ENCODE measurements at regions of chr10 and their contacts with region 1.

Region 1: GRCh38 chr10:17257466-17258321 is 29.7 kb downstream of the VIM start:
- DNase-seq: peak; percentile 68
- H3K4me3 ChIP-seq: no peak overlapping the region
- H3K27ac ChIP-seq: no peak overlapping the region
- H3K4me1 ChIP-seq: no peaks in the 10 kb centered on the region
- CTCF ChIP-seq: peak; percentile 89

Region 2: GRCh38 chr10:16828114-16828568 is 429.6 kb before region 1 on chr10:
- CTCF ChIA-PET with region 1: no interaction called
- POLR2A ChIA-PET with region 1: no interaction called
- intact Hi-C with region 1: loop called (anchors 2 kb)
- DNase-seq: peak; percentile 77
- H3K4me3 ChIP-seq: no peak overlapping the region
- H3K27ac ChIP-seq: no peak overlapping the region
- H3K4me1 ChIP-seq: no peaks in the 10 kb centered on the region
- CTCF ChIP-seq: peak; percentile 76

Region 3: DNA sequence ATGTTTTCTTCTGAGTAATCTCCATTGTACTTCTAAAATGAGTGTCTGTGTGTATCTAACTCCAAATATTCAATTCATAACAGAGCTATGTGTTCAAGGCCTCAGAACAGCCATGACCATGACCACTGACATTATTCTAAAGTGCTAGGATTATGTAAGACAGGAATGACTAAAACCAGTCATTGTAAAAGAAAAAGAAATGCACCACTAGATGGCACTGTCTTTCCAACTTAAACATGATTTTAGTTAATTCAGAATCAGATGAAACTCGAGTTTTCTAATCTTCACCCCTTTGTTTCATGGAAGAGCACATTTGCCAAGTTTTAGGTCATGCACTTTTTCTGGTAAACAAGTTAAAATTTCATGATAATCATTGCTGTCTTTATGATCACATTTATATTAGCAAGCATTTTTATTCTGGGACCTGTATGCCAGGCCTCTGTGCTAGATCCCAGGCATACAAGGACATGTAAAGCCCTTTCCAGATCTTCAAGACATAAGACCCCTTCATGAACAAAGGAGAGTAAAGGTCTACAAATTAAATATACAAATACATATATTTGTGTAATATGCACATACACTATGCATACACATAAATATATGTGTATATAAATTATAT is 414.3 kb before region 1 on chr10:
- CTCF ChIA-PET with region 1: no interaction called
- POLR2A ChIA-PET with region 1: no interaction called
- intact Hi-C with region 1: loop called (anchors 1 kb)
- DNase-seq: peak; percentile 80
- H3K4me3 ChIP-seq: no peak overlapping the region
- H3K27ac ChIP-seq: no peak overlapping the region
- H3K4me1 ChIP-seq: no peaks in the 10 kb centered on the region
- CTCF ChIP-seq: peak; percentile 85